A673 (cell line): ENCODE measurements at regions of chr18 and their contacts with region 1.

Region 1: GRCh38 chr18:22789600-22789999 is 143.5 kb upstream of the RBBP8 start:
- DNase-seq: no peak
- H3K4me3 ChIP-seq: no peak overlapping the region
- H3K27ac ChIP-seq: no peak overlapping the region
- H3K4me1 ChIP-seq: no peaks in the 10 kb centered on the region
- H3K27me3 ChIP-seq: peaks cover 27% of the 10 kb centered on the region
- CTCF ChIP-seq: no peak

Region 2: DNA sequence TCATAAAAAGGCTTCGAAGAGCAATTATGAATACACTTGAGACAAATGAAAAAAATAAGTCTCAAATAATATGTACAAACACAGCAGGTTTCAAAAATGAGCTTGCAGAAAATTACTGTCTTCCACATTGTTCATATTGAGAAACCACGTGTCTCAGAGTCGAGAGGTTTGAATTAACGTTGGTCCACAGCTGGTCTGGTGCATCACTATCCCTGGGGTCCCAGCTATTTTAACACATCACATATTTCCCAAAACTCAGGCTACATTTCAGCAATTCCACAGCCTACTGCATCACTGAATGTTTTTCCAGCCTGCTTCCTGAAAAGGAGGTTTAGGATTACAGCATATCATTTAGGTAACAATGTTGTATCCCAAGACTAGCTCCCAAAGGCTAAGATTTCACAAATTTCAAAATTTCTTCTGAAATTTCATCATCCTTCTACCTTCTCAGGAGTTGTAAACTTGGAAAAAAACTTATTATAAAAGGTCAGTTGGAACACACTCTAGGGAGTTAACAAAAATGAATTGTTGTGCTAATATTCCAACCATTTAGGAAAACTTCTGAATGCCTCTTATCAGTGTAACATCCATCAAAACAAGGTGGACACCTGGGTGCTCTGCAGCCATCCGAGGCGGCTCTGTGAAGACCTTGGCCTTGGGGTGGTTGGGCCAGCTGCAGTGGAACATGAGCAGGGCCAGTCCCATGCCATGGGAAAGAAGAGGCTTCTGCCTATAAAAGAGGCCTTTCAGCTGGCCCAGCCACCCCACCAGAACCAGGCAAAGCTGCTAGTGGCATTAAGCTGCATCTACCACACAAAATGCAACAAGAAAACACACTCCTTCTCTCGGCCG is 54.6 kb before region 1 on chr18:
- CTCF ChIA-PET with region 1: no interaction called
- POLR2A ChIA-PET with region 1: no interaction called
- intact Hi-C with region 1: loop called (anchors 5 kb)
- DNase-seq: no peak
- H3K4me3 ChIP-seq: no peak overlapping the region
- H3K27ac ChIP-seq: no peak overlapping the region
- H3K4me1 ChIP-seq: no peaks in the 10 kb centered on the region
- H3K27me3 ChIP-seq: no peaks in the 10 kb centered on the region
- CTCF ChIP-seq: no peak